CD14-positive monocyte (primary cell): ENCODE measurements at regions of chr3 and their contacts with region 1.

Region 1: GRCh38 chr3:53721187-53722119 is 124.8 kb downstream of the CHDH start:
- DNase-seq: peak in 1 of 3 donors; percentile 58
- H3K4me3 ChIP-seq: no peak overlapping the region
- H3K4me3 Mint-ChIP-seq: peak overlapping the region in 1 of 2 donors; percentile 47
- H3K27ac ChIP-seq: no peak overlapping the region
- H3K27ac Mint-ChIP-seq: no peak overlapping the region
- H3K4me1 ChIP-seq: peaks cover 7 to 9% of the 10 kb centered on the region in 2 donors
- H3K4me1 Mint-ChIP-seq: peaks cover 7% of the 10 kb centered on the region
- H3K27me3 ChIP-seq: peaks cover 3 to 9% of the 10 kb centered on the region in 2 donors
- H3K27me3 Mint-ChIP-seq: peaks cover 22 to 40% (median 23%) of the 10 kb centered on the region in 3 donors
- CTCF ChIP-seq: no peak

Region 2: DNA sequence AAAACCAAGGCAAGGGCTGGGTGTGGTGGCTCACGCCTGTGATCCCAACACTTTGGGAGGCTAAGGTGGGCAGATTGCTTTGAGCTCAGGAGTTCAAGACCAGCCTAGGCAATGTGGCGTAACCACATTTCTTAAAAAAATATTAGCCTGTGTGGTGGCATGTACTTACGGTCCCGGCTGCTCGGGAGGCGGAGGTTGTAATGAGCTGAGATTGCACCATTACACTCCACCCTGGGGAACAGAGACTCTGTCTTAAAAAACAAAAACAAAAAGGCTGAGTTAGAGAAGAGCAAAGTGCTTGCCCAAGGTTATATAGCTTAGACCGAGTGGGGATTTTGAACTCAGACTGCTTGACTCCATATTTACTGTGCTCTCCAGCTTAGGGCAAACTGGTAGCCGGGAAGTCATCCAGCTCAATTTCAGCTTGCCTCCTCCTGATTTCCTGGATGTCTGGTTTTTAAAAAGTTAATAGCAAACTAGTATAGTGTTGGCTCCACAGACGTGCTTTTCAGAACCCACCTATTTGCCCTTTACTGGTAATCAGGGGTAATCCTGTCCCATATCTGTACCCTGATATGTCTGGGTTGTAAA is 88.2 kb before region 1 on chr3:
- intact Hi-C with region 1: no loop called
- DNase-seq: no peak
- H3K4me3 ChIP-seq: no peak overlapping the region
- H3K4me3 Mint-ChIP-seq: no peak overlapping the region
- H3K27ac ChIP-seq: no peak overlapping the region
- H3K27ac Mint-ChIP-seq: no peak overlapping the region
- H3K4me1 ChIP-seq: no peaks in the 10 kb centered on the region
- H3K4me1 Mint-ChIP-seq: no peaks in the 10 kb centered on the region
- H3K27me3 ChIP-seq: peaks cover 3 to 15% of the 10 kb centered on the region in 2 donors
- H3K27me3 Mint-ChIP-seq: peaks cover 15 to 46% (median 20%) of the 10 kb centered on the region in 3 donors
- CTCF ChIP-seq: no peak

Region 3: DNA sequence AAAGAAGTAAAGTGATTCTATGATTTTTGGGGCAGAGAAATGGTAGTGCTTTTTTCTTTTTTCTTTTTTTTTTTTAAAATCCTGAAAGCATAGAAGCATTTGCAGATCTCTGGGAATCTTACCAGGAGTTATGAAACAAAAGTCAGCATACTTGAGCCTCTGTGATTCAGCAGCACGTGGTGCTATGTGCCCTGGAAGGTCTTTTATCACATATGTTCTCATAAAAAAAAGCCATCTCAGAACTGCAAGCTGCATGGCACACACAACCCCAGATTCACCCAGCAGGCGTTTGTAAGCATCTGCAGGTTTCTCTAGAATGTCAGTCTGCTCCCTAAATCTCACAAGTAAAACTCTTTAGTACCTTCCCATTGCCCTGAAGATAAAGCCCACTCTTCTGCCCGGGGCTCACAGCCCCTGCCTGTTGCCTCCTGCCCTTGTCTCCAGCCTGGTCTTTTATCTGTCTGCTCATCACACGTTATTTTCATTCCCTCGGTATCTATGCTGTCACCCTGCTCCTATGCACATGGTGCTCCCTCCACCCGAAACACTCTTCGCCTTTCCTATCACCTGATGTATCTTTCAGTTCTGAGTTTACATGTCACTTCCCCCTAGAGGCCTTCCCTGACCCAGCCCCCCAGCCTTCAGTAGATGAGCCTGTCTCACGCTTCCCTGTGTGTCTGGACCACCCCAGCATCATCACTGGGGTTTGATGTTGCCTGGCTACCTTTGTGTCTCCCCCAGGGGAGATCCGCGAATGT is 52.3 kb after region 1 on chr3:
- intact Hi-C with region 1: loop called in 1 of 2 experiments (anchors 5 kb)
- DNase-seq: no peak
- H3K4me3 ChIP-seq: no peak overlapping the region
- H3K4me3 Mint-ChIP-seq: no peak overlapping the region
- H3K27ac ChIP-seq: no peak overlapping the region
- H3K27ac Mint-ChIP-seq: no peak overlapping the region
- H3K4me1 ChIP-seq: no peaks in the 10 kb centered on the region
- H3K4me1 Mint-ChIP-seq: peaks cover 2% of the 10 kb centered on the region
- H3K27me3 ChIP-seq: no peaks in the 10 kb centered on the region
- H3K27me3 Mint-ChIP-seq: peaks cover 2 to 16% (median 11%) of the 10 kb centered on the region in 3 donors
- CTCF ChIP-seq: no peak